ENCODE measurements at regions of chrX and their contacts with region 1.

Region 1: DNA sequence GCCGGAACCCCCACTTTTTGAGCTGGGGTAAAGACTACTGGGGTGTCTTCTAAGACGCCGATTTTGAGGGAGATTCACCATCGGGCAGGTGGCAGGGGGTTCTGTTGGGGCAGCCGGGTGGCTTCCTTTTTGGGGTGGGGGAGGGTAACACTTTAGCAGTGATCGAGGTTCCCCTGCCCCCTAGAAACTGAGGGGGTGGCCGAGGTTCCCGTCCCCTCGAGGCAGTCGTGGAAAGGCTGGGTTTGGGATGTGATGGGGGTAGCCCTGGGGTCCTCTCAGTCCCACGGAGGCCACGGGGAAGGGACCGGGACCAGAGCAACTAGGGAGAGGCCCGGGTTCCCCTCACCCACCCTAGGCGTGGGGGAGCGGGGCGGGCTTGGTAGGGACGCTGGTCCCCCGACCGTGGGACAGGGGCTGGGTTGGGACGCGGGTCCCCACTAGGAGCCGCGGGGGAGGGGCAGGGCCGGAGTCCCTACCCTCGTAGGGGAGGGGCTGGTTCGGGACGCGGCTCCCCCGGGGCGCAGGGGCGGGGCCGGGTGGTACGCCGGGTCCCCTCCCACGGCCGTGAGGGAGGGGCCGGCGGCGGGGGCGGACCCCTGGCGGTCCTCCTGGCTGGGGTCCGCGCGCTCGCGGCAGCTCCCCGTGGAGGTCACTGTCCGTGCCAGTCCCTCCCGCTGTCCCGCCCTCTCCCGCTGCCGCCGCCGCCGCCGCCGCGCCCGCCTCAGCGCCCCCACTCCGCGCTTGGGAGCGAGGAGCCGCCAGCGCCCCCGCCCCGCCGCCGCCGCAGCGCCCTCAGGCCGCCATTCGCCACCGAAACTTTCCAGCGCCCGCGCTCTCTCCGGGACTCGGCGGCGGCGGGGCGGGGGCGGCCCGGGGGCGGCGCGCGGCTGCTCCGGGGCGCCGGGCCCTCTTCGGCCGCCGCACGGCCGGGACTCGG is at the start of gene TBL1X:
- DNase-seq: peak; percentile 71
- H3K4me3 ChIP-seq: peak within 1 kb of the TSS; percentile 84
- H3K27ac ChIP-seq: peak within 1 kb of the TSS; percentile 89
- H3K4me1 ChIP-seq: peaks cover 32% of the 10 kb centered on the region
- CTCF ChIP-seq: no peak
- total RNA-seq, gene TBL1X: 10.6 and 16.1 TPM in 2 replicates

Region 2: DNA sequence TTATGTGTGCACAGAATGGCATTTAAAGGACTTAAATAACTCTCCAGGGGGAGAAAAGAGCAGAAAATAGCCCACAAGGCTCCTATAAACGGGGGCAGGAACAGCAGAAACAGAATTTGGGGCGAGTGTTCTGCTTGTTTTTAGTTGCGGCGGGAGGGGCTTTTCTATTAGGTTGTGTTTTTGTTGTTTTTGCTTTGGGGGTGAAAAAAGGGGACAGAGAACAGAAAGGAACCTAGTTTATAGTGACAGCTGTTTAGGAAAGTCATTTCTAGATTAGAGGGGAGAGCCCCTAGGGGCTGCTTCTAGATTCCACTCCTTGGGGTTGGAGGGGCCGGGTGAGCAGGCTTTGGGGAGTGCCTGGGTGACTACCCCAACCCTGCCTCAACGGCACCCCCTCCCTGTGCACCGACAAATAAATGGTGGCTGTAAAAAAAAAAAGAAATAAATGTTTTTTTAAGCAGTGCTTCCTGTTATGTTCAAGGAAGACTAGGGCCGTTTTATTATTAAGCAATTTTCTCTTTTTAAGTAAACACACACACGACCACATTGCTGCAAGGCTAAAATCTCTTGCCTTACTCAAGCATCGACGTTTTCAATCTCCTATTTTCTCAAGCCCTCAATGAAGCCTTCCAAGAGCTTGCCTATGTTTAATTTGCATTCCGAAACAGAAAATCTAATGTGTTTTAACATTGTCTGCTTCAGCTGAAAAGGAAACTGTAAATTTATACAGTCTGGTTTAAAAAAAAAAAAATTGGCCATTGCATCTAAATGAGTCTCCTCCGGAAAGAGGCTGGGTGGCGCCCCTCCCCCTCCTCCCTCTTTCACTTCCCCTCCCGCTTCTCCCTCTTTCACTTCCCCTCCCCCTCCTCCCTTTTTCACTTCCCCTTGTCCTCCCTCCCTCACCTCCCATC is 123.2 kb before region 1 on chrX:
- CTCF ChIA-PET with region 1: no interaction called
- POLR2A ChIA-PET with region 1: no interaction called
- intact Hi-C with region 1: loop called (anchors 5 kb)
- DNase-seq: peak; percentile 77
- H3K4me3 ChIP-seq: peak overlapping the region; percentile 43
- H3K27ac ChIP-seq: peak overlapping the region; percentile 81
- H3K4me1 ChIP-seq: peaks cover 17% of the 10 kb centered on the region
- CTCF ChIP-seq: no peak; the same call in 1 of the 2 replicates

Region 3: DNA sequence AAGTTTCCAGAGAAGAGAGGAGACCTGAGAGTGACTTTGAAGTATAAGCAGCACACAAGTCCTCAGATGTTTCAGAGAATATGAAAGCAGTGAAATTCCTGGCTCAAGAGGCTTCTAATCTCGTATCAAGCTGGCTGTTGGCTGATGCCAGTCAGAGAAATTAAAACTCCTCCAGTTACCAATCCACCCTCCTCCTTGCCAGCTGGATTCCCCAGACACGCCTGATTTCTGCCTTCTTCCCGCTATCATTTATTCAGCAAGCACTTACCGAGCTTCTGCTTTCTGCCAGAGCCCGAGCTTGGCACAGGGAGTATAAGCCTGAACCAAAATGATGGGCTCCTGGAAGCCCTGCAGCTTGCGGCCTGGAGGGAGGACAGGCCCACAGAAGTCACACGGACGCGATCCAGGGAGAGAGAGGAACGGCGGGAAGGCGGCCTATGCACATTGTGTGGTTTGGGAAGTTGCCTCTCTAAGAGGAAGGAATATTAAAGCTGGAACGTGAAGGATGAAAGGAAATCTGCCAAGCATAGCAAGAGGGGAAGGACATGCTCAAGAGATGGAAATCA is 102.3 kb before region 1 on chrX:
- CTCF ChIA-PET with region 1: no interaction called
- POLR2A ChIA-PET with region 1: no interaction called
- intact Hi-C with region 1: no loop called
- DNase-seq: no peak
- H3K4me3 ChIP-seq: no peak overlapping the region
- H3K27ac ChIP-seq: no peak overlapping the region
- H3K4me1 ChIP-seq: no peaks in the 10 kb centered on the region
- CTCF ChIP-seq: no peak

Region 4: DNA sequence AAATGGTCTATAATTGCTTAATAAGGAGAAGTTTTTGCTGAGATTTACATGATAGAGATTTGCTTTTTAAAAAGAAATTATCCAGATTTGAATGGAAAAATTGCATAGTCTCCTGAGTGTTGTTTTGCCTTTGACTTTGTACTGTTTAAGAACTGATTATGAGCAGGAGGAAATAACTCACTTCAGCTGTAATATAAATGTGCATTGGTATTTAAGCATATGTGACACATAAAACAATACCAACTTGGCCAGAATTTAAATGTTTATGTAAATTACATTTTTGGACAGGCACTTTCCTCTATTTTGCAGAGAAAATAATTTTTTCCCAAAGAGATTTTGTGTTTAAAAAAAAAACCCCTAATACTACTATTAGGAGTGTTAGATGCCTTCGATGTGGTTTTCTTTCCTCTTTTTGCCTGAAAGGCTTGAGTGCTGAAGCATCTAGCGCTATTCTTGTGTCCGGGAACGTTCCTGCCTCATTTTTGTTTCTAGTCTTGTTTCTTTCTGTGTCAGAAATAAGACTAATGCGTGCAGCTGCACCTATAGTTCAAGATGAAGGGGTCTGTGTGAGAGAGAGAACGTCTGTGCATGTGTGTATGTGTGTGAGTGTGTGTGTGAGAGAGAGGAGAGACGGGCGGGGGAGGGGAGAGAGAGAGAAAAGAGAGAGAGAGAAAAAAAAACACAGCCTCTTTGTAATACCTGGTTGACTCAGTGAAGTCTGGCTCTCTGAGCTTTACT is 61.0 kb after region 1 on chrX:
- CTCF ChIA-PET with region 1: no interaction called
- POLR2A ChIA-PET with region 1: interaction called, 3 read pairs
- intact Hi-C with region 1: loop called (anchors 2 kb)
- DNase-seq: peak; percentile 68
- H3K4me3 ChIP-seq: peak overlapping the region; percentile 55
- H3K27ac ChIP-seq: peak overlapping the region; percentile 53
- H3K4me1 ChIP-seq: peaks cover 38% of the 10 kb centered on the region
- CTCF ChIP-seq: no peak

Region 5: GRCh38 chrX:9708904-9709553 is 244.3 kb after region 1 on chrX:
- CTCF ChIA-PET with region 1: no interaction called
- POLR2A ChIA-PET with region 1: no interaction called
- intact Hi-C with region 1: loop called (anchors 5 kb)
- DNase-seq: peak; percentile 81
- H3K4me3 ChIP-seq: no peak overlapping the region
- H3K27ac ChIP-seq: no peak overlapping the region
- H3K4me1 ChIP-seq: peaks cover 4% of the 10 kb centered on the region
- CTCF ChIP-seq: peak; percentile 82

Measured in OCI-LY7 (cell line).